AG04449 (cell line): ENCODE measurements at regions of chr2 and their contacts with region 1.

Region 1: GRCh38 chr2:200963124-200963917 is at the start of gene ORC2:
- DNase-seq: peak; percentile 67
- H3K4me3 ChIP-seq: peak within 1 kb of the TSS; percentile 98
- CTCF ChIP-seq: peak; percentile 55

Region 2: DNA sequence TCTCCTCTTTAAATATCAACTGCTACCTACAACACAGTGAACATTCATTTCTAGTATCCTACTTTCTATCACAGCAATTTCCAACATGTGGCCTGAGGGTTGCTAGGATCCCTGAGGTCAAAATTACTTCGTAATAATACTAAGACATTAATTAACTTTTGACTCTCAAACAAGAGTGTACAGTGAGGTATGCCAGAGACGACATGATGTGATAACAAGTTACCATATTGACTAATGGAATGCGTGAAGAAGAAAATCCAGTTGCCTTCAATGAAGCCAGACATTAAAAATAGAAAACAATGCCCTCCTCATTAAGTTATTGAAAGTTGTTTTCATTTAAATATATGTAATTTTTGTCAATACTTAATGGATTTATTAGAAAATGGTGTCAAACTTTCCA is 12.9 kb before region 1 on chr2:
- CTCF ChIA-PET with region 1: interaction called, 13 read pairs
- POLR2A ChIA-PET with region 1: interaction called, 3 read pairs
- DNase-seq: no peak
- H3K4me3 ChIP-seq: no peak overlapping the region
- CTCF ChIP-seq: no peak

Region 3: GRCh38 chr2:200975672-200976071 is 12.4 kb after region 1 on chr2:
- CTCF ChIA-PET with region 1: interaction called, 22 read pairs
- POLR2A ChIA-PET with region 1: no interaction called
- DNase-seq: no peak
- H3K4me3 ChIP-seq: no peak overlapping the region
- CTCF ChIP-seq: no peak